ENCODE measurements at regions of chr1 and their contacts with region 1.

Region 1: DNA sequence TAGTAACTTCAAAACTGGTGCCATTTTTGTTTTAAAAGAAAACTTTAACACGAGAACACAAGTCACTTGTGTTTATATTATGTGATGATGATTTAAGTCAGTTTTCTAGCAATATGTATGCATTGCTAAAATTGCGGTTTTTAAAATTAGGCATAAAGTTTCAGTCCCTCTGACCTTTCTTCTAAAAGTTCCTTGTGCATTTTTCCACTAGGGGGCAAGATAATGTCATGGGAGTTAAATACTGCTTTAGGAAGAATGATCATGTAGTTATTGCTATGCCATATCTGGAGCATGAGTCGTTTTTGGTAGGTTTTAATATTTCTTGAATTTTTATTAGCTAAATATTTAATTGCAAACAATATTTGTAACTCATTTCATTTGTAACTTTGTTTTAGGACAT is 10.7 kb downstream of the CDC7 start:
- DNase-seq: peak in 6 of 9 donors; percentile 22 to 56 (median 43)
- ATAC-seq: peak; percentile 49
- H3K4me3 ChIP-seq: no peak overlapping the region
- H3K4me3 Mint-ChIP-seq: no peak overlapping the region
- H3K27ac ChIP-seq: no peak overlapping the region
- H3K27ac Mint-ChIP-seq: no peak overlapping the region
- H3K4me1 ChIP-seq: peaks cover 0 to 14% of the 10 kb centered on the region in 2 donors
- H3K4me1 Mint-ChIP-seq: peaks cover 0 to 16% (median 5%) of the 10 kb centered on the region in 7 donors
- H3K27me3 ChIP-seq: no peaks in the 10 kb centered on the region
- H3K27me3 Mint-ChIP-seq: no peaks in the 10 kb centered on the region

Region 2: DNA sequence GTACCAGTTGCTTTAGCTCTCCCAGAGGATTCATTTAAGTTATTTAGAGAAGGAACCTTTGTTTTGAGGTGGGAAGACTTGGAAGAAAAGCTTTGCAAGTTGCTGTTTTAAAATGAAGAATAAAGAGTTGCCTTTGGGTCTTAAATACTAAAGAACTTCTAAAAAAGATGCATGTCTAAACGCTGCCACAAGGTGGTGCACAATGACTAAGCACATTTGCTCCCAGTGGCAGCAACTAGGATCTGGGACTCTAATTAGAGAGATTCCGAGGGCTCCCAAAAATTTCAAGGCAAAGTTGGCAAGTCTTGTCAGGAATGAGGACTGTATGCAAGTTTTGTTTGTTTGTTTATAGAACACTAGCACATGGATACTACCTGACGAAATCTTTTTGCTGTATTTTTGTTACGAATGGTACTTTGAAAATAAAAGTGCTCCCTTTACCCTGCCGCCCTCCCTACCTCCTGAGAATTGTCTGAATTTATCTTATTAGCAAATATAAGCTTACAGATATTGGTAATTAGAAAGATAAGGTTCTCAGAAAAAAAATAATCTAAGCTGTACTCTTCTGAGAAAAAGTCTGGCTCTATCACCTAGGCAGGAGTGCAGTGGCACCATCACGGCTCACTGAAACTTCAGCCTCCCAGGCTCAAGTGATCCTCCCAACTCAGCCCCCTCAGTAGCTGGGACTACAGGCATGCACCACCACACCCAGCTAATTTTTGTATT is 228.5 kb before region 1 on chr1:
- CTCF ChIA-PET with region 1: interaction called, 3 read pairs
- POLR2A ChIA-PET with region 1: no interaction called
- intact Hi-C with region 1: loop called in 1 of 2 experiments (anchors 1 kb)
- DNase-seq: peak in 8 of 9 donors; percentile 2 to 34 (median 22)
- ATAC-seq: peak; percentile 60
- H3K4me3 ChIP-seq: no peak overlapping the region
- H3K4me3 Mint-ChIP-seq: no peak overlapping the region
- H3K27ac ChIP-seq: no peak overlapping the region
- H3K27ac Mint-ChIP-seq: no peak overlapping the region
- H3K4me1 ChIP-seq: no peaks in the 10 kb centered on the region
- H3K4me1 Mint-ChIP-seq: no peaks in the 10 kb centered on the region
- H3K27me3 ChIP-seq: no peaks in the 10 kb centered on the region
- H3K27me3 Mint-ChIP-seq: peaks cover 4 to 13% (median 7%) of the 10 kb centered on the region in 5 donors

Region 3: GRCh38 chr1:91617285-91617765 is 105.9 kb after region 1 on chr1:
- CTCF ChIA-PET with region 1: interaction called, 3 read pairs
- POLR2A ChIA-PET with region 1: no interaction called
- intact Hi-C with region 1: loop called in 1 of 2 experiments (anchors 5 kb)
- DNase-seq: peak in 4 of 9 donors; percentile 5 to 14 (median 8)
- ATAC-seq: no peak
- H3K4me3 ChIP-seq: no peak overlapping the region
- H3K4me3 Mint-ChIP-seq: no peak overlapping the region
- H3K27ac ChIP-seq: no peak overlapping the region
- H3K27ac Mint-ChIP-seq: no peak overlapping the region
- H3K4me1 ChIP-seq: no peaks in the 10 kb centered on the region
- H3K4me1 Mint-ChIP-seq: peaks cover 0 to 6% (median 0%) of the 10 kb centered on the region in 7 donors
- H3K27me3 ChIP-seq: no peaks in the 10 kb centered on the region
- H3K27me3 Mint-ChIP-seq: peaks cover 0 to 18% (median 0%) of the 10 kb centered on the region in 5 donors

Region 4: GRCh38 chr1:91697416-91697815 is 186.0 kb after region 1 on chr1:
- CTCF ChIA-PET with region 1: no interaction called
- POLR2A ChIA-PET with region 1: no interaction called
- intact Hi-C with region 1: loop called in 1 of 2 experiments (anchors 5 kb)
- DNase-seq: peak in 8 of 9 donors; percentile 52 to 73 (median 60)
- ATAC-seq: peak; percentile 88
- H3K4me3 ChIP-seq: peak overlapping the region; percentile 45
- H3K4me3 Mint-ChIP-seq: peak overlapping the region; percentile 25 to 88 (median 57)
- H3K27ac ChIP-seq: peak overlapping the region; percentile 35
- H3K27ac Mint-ChIP-seq: peak overlapping the region; percentile 39 to 90 (median 83)
- H3K4me1 ChIP-seq: peaks cover 14 to 18% of the 10 kb centered on the region in 2 donors
- H3K4me1 Mint-ChIP-seq: peaks cover 19 to 43% (median 37%) of the 10 kb centered on the region in 7 donors
- H3K27me3 ChIP-seq: no peaks in the 10 kb centered on the region
- H3K27me3 Mint-ChIP-seq: no peaks in the 10 kb centered on the region

Region 5: DNA sequence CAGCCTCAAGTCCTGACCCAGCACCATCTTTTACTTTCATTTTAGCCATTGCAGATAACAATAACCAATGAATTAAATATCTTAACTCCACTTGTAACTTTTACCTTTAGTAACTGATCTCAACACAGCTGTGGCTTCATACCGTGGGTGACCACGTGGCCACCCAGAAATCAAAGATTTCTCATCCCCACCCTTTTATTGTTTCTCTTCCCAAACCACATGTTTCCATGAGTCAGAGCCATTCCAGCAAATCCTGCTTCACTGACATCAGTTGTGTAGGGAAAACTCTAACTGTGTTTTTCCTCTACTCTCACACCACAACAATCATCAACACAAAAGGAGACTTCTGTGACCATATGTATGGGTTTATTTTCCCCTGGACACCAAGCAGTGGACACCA is 412.8 kb after region 1 on chr1:
- CTCF ChIA-PET with region 1: interaction called, 106 read pairs
- POLR2A ChIA-PET with region 1: no interaction called
- intact Hi-C with region 1: loop called (anchors 1 kb)
- DNase-seq: no peak
- ATAC-seq: no peak
- H3K4me3 ChIP-seq: no peak overlapping the region
- H3K4me3 Mint-ChIP-seq: no peak overlapping the region
- H3K27ac ChIP-seq: no peak overlapping the region
- H3K27ac Mint-ChIP-seq: no peak overlapping the region
- H3K4me1 ChIP-seq: peaks cover 0 to 3% of the 10 kb centered on the region in 2 donors
- H3K4me1 Mint-ChIP-seq: peaks cover 0 to 7% (median 0%) of the 10 kb centered on the region in 7 donors
- H3K27me3 ChIP-seq: no peaks in the 10 kb centered on the region
- H3K27me3 Mint-ChIP-seq: peaks cover 0 to 3% (median 0%) of the 10 kb centered on the region in 5 donors

Region 6: DNA sequence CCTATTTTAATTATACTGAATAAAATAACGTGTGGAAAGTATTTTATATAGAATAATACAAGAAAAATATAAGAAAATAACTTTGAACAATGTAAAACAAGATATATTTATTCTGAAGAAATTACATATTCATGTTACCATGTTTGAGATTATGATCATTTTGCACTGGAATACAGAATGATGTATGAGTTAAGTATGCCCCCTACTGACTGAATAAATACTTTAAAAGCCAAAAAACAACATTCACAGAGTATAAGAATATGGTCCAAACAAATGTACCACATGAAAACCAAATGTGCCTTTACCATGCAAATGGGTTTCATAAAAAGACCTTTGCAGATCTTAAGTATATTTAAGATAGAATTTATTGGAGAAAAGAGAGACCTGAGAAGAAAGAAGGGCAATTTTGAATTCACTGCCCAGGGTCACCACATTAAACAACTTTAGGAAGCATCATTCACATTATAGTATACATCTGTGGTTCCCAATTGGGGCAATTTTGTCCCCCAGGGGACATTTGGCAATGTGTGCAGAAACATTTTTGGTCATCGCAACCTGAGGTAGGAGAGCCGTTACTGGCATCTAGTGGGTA is 1111.9 kb after region 1 on chr1:
- CTCF ChIA-PET with region 1: interaction called, 3 read pairs
- POLR2A ChIA-PET with region 1: no interaction called
- intact Hi-C with region 1: loop called in 1 of 2 experiments (anchors 2 kb)
- DNase-seq: peak in 6 of 9 donors; percentile 4 to 42 (median 35)
- ATAC-seq: peak; percentile 49
- H3K4me3 ChIP-seq: no peak overlapping the region
- H3K4me3 Mint-ChIP-seq: no peak overlapping the region
- H3K27ac ChIP-seq: no peak overlapping the region
- H3K27ac Mint-ChIP-seq: no peak overlapping the region
- H3K4me1 ChIP-seq: no peaks in the 10 kb centered on the region
- H3K4me1 Mint-ChIP-seq: no peaks in the 10 kb centered on the region
- H3K27me3 ChIP-seq: no peaks in the 10 kb centered on the region
- H3K27me3 Mint-ChIP-seq: peaks cover 0 to 4% (median 0%) of the 10 kb centered on the region in 5 donors

Region 7: DNA sequence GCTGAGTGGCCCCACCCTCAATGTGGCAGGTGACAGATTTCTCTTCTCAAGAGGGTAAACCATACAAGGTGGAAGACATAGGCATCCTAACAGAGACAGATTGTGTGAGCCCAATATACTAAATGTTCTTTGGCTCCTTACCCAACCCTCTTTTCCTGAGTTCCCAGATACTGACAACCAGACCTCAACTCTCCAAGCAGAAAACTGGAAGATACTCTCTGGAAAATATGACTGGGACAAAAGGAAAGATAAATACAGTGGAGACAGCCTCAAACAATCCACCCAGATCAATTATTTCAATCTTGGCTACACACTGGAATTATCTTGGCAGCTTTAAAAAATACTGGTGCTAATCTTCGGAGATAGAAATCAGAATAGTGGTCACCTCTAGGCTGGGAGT is 1267.0 kb after region 1 on chr1:
- CTCF ChIA-PET with region 1: no interaction called
- POLR2A ChIA-PET with region 1: no interaction called
- intact Hi-C with region 1: no loop called
- DNase-seq: no peak
- ATAC-seq: no peak
- H3K4me3 ChIP-seq: no peak overlapping the region
- H3K4me3 Mint-ChIP-seq: no peak overlapping the region
- H3K27ac ChIP-seq: no peak overlapping the region
- H3K27ac Mint-ChIP-seq: no peak overlapping the region
- H3K4me1 ChIP-seq: no peaks in the 10 kb centered on the region
- H3K4me1 Mint-ChIP-seq: peaks cover 0 to 7% (median 5%) of the 10 kb centered on the region in 7 donors
- H3K27me3 ChIP-seq: peaks cover 0 to 7% of the 10 kb centered on the region in 2 donors
- H3K27me3 Mint-ChIP-seq: peaks cover 28 to 71% (median 39%) of the 10 kb centered on the region in 5 donors

Measured in naive thymus-derived CD4-positive, alpha-beta T cell (primary cell).